Right cardiac atrium (tissue), 5 donors: ENCODE measurements at regions of chr12 and their contacts with region 1.

Region 1: GRCh38 chr12:57309420-57309819 is 58.4 kb upstream of the STAC3 start:
- DNase-seq: no peak
- ATAC-seq: no peak
- H3K4me3 ChIP-seq: no peak overlapping the region
- H3K27ac ChIP-seq: no peak overlapping the region
- H3K4me1 ChIP-seq: no peaks in the 10 kb centered on the region
- H3K27me3 ChIP-seq: no peaks in the 10 kb centered on the region

Region 2: GRCh38 chr12:57250541-57251324 is 58.7 kb before region 1 on chr12 and contains the start of gene STAC3:
- intact Hi-C with region 1: no loop called
- DNase-seq: no peak
- ATAC-seq: no peak
- H3K4me3 ChIP-seq: no peak within 1 kb of the TSS
- H3K27ac ChIP-seq: no peak within 1 kb of the TSS
- H3K4me1 ChIP-seq: no peaks in the 10 kb centered on the region
- H3K27me3 ChIP-seq: no peaks in the 10 kb centered on the region
- total RNA-seq, gene STAC3: 0.91 to 2.3 (median 1.6) TPM

Region 3: DNA sequence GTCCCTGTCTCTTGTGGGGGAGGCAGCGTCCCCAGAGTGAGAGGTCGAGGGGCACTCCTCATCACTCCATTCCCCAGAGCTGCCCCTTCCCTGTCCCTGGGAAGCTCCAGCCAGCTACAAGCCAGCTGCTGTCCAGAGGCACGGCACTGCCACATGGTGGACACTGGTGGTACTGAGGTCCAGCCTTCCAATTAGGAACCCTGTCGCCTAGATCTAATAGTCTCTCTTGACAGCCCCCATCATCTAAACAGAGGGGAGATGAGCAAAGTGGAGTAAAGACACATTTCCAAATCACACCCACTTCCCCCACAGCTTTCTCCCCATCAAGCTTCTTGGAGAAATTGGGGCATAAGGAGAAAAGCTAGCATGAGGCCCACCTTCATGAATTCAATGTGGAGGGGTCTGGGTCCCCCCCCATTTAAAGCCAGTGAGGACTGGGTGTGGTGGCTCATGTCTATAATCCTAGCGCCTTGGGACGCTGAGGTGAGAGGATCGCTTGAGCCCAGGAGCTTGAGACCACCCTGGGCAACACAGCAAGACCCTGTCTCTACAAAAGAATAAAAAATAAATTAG is 143.6 kb after region 1 on chr12:
- intact Hi-C with region 1: loop called (anchors 2 kb)
- DNase-seq: peak; percentile 79 to 94 (median 91)
- ATAC-seq: peak; percentile 82 to 83
- H3K4me3 ChIP-seq: no peak overlapping the region
- H3K27ac ChIP-seq: peak overlapping the region; percentile 79
- H3K4me1 ChIP-seq: no peaks in the 10 kb centered on the region
- H3K27me3 ChIP-seq: no peaks in the 10 kb centered on the region